Natural killer cell (primary cell): ENCODE measurements at regions of chr12 and their contacts with region 1.

Region 1: DNA sequence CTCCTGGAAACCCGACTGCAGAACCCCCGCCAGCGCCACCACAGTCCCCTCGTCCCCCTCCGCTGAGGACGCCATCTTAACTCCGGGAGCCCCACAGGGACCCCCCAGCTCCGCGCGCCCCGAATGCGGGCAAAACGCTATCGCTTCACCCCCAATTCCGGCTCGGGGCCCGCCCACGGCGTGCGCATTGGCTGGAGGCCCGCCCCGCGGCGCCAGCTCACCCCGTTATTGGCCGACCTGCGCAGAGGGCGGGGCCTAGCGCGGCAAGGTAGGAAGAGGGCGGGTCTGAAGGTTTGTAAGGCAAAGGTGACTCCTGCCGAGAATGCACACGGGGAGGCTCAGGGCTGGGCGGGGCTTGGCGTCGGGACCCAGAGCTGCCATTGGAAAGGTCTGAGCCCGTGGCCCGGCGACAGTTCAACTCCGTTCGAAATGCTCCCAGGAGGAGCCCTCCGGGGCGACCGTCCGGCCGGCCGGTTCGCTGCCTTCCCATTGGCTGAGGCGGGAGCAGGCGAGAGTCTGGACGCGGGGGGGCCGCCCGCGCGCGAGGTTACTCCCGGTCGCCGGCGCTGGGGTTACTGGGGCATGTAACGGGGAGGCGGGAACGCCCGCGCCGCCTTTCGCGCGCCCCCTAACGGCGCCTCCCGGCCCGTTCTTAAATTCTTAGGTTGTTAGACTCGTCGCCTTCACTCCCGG is at the start of gene LPCAT3:
- DNase-seq: peak; percentile 97 to 99
- ATAC-seq: peak; percentile 91 to 98 (median 91)
- H3K4me3 ChIP-seq: peak within 1 kb of the TSS; percentile 92
- H3K4me3 Mint-ChIP-seq: peak within 1 kb of the TSS; percentile 87
- H3K27ac ChIP-seq: peak within 1 kb of the TSS; percentile 93
- H3K27ac Mint-ChIP-seq: peak within 1 kb of the TSS; percentile 69 to 82
- H3K4me1 ChIP-seq: peaks cover 11% of the 10 kb centered on the region
- H3K4me1 Mint-ChIP-seq: peaks cover 13 to 25% of the 10 kb centered on the region in 2 donors
- H3K27me3 ChIP-seq: no peaks in the 10 kb centered on the region
- H3K27me3 Mint-ChIP-seq: no peaks in the 10 kb centered on the region
- CTCF ChIP-seq: peak; percentile 89
- total RNA-seq, gene LPCAT3: 45.6 to 54.3 (median 45.6) TPM

Region 2: GRCh38 chr12:6925540-6926279 is 92.8 kb before region 1 on chr12:
- intact Hi-C with region 1: loop called (anchors 1 kb)
- DNase-seq: no peak
- ATAC-seq: no peak
- H3K4me3 ChIP-seq: no peak overlapping the region
- H3K4me3 Mint-ChIP-seq: peak overlapping the region; percentile 90
- H3K27ac ChIP-seq: no peak overlapping the region
- H3K27ac Mint-ChIP-seq: peak overlapping the region in 1 of 2 donors; percentile 89
- H3K4me1 ChIP-seq: peaks cover 43% of the 10 kb centered on the region
- H3K4me1 Mint-ChIP-seq: peaks cover 38 to 43% of the 10 kb centered on the region in 2 donors
- H3K27me3 ChIP-seq: no peaks in the 10 kb centered on the region
- H3K27me3 Mint-ChIP-seq: no peaks in the 10 kb centered on the region
- CTCF ChIP-seq: no peak

Region 3: GRCh38 chr12:6953442-6954315 is 64.8 kb before region 1 on chr12:
- intact Hi-C with region 1: loop called (anchors 5 kb)
- DNase-seq: peak; percentile 70 to 89
- ATAC-seq: peak; percentile 19 to 54 (median 25)
- H3K4me3 ChIP-seq: peak overlapping the region; percentile 93
- H3K4me3 Mint-ChIP-seq: peak overlapping the region; percentile 91
- H3K27ac ChIP-seq: peak overlapping the region; percentile 96
- H3K27ac Mint-ChIP-seq: peak overlapping the region; percentile 98 to 99
- H3K4me1 ChIP-seq: peaks cover 90% of the 10 kb centered on the region
- H3K4me1 Mint-ChIP-seq: peaks cover 84 to 98% of the 10 kb centered on the region in 2 donors
- H3K27me3 ChIP-seq: no peaks in the 10 kb centered on the region
- H3K27me3 Mint-ChIP-seq: no peaks in the 10 kb centered on the region
- CTCF ChIP-seq: no peak

Region 4: DNA sequence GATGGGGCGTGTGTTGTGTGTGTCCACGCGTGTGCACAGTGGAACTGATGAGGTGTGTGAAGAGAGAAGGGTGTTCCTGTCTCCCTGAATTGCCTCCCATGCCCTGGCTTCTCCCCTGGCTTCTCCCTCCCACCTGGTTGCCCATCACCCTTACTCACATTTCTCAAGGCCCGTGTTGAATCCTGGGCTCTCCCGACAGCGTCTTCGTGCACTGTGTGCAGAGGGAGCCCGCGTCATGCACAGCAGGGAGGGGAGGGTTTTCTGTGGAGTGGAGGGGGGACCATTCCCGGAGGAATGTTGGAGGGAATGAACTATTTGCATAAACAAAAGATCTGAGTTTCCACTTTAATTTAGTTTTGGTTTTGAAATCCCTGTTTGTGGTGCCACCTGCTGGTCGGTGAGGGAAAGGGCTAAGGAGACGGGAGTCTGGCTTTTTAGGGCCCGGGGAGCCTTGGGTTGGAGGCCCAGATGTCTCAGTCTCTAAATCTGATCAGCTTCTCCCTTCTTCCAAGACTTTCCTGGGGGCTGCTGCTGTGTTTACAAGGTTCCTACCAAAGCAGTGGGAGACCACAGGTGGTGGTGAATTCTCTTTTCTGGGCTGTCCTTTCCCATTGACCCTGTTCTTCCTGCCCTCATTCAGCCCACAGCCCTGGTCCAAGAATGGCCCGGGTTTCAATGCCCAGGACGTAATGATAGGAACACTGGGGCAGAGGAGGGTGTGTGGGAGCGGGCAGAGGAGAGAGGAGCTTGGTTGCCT is 73.9 kb after region 1 on chr12 and contains the start of gene C1R:
- intact Hi-C with region 1: loop called (anchors 5 kb)
- DNase-seq: peak; percentile 64 to 85
- ATAC-seq: peak in 2 of 3 donors; percentile 82 to 86
- H3K4me3 ChIP-seq: peak within 1 kb of the TSS; percentile 25
- H3K4me3 Mint-ChIP-seq: peak within 1 kb of the TSS; percentile 77
- H3K27ac ChIP-seq: no peak within 1 kb of the TSS
- H3K27ac Mint-ChIP-seq: peak within 1 kb of the TSS; percentile 43 to 79
- H3K4me1 ChIP-seq: peaks cover 12% of the 10 kb centered on the region
- H3K4me1 Mint-ChIP-seq: peaks cover 0 to 22% of the 10 kb centered on the region in 2 donors
- H3K27me3 ChIP-seq: no peaks in the 10 kb centered on the region
- H3K27me3 Mint-ChIP-seq: no peaks in the 10 kb centered on the region
- CTCF ChIP-seq: peak; percentile 79
- total RNA-seq, gene C1R: 6.4 to 7.8 (median 6.6) TPM

Region 5: GRCh38 chr12:7142056-7142644 is 123.7 kb after region 1 on chr12:
- intact Hi-C with region 1: no loop called
- DNase-seq: peak; percentile 36 to 71
- ATAC-seq: peak; percentile 73 to 77 (median 75)
- H3K4me3 ChIP-seq: no peak overlapping the region
- H3K4me3 Mint-ChIP-seq: no peak overlapping the region
- H3K27ac ChIP-seq: no peak overlapping the region
- H3K27ac Mint-ChIP-seq: no peak overlapping the region
- H3K4me1 ChIP-seq: no peaks in the 10 kb centered on the region
- H3K4me1 Mint-ChIP-seq: peaks cover 6 to 12% of the 10 kb centered on the region in 2 donors
- H3K27me3 ChIP-seq: no peaks in the 10 kb centered on the region
- H3K27me3 Mint-ChIP-seq: no peaks in the 10 kb centered on the region
- CTCF ChIP-seq: peak; percentile 57